Right ventricle myocardium inferior (tissue), 1 donor: ENCODE measurements at regions of chr14 and their contacts with region 1.

Region 1: GRCh38 chr14:31106768-31107167 is 80.6 kb upstream of the STRN3 start:
- DNase-seq: no peak
- ATAC-seq: no peak

Region 2: GRCh38 chr14:31047503-31047902 is 59.3 kb before region 1 on chr14:
- intact Hi-C with region 1: no loop called
- DNase-seq: no peak
- ATAC-seq: no peak

Region 3: DNA sequence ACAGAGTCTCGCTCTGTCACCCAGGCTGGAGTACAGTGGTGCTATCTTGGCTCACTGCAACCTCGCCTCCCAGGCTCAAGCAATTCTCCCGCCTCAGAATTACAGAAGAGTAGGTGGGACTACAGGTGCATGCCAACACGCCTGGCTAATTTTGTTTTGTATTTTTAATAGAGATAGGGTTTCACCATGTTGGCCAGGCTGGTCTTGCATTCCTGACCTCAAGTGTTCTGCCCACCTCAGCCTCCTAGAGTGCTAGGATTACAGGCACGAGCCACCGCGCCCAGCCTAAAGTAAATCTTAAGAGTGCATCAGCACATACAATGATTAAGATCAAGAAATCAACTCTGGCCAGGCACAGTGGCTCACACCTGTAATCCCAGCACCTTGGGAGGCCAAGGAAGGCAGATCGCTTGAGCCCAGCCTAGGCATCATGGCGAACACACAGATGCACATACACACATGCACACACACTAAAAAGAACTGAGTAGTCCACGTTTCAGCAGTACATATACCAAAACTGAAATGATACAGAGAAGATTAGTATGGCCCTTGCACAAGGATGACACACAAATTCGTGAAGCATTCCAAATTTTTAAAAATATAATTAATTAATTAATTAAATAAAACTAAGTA is 35.8 kb after region 1 on chr14:
- intact Hi-C with region 1: loop called (anchors 5 kb)
- DNase-seq: no peak
- ATAC-seq: no peak